GM10248 (cell line): ENCODE measurements at regions of chr12 and their contacts with region 1.

Region 1: GRCh38 chr12:52087961-52088820 is 8.7 kb downstream of the SMIM41 start:
- DNase-seq: peak; percentile 65
- CTCF ChIP-seq: no peak

Region 2: DNA sequence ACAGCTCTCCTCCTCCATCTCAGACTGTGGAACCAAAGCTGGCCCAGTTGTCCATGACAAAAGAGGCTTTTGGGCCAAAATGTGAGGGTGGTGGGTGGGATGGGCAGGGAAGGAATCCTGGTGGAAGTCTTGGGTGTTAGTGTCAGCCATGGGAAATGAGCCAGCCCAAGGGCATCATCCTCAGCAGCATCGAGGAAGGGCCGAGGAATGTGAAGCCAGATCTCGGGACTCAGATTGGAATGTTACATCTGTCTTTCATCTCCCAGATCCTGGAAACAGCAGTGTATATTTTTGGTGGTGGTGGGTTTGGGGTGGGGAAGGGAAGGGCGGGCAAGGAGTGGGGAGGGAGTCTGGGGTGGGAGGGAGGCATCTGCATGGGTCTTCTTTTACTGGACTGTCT is 93.2 kb before region 1 on chr12:
- CTCF ChIA-PET with region 1: interaction called, 15 read pairs
- POLR2A ChIA-PET with region 1: no interaction called
- DNase-seq: no peak
- CTCF ChIP-seq: no peak

Region 3: DNA sequence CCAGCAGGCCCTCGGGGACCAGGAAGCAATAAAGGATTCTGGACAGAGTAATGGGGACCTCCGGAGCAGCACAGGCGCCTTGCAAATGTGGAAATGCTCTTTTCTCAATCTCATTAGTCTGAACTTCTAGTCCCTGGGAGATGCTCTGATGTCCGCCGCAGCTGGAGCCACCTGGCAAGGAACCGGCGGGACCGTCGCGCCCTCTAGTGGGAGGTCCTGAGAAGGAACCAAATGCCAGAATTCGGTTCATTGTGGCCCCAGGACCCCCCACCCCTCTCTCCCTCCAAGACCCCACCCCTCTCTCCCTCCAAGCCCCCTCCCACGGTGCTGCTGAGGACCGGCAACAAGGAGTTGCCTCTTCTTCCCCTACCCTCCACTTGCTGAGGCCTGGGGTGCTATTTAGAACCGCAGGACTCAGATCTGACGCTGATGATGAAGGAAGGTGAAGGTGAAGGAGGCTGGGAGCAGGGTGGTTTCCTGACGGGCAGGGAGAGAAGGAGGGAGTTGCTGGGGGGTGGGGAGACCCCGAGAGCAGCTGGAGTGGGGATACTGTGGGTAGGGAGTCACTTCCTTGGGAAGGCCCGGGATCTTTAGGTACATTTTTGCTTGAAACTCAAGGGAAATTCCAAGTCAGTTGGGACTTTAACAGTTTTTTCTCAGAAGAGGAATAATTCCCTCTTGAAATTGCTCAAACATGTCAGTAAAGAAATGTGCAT is 33.8 kb after region 1 on chr12:
- CTCF ChIA-PET with region 1: interaction called, 19 read pairs
- POLR2A ChIA-PET with region 1: no interaction called
- DNase-seq: peak; percentile 81
- CTCF ChIP-seq: peak; percentile 81

Region 4: GRCh38 chr12:52144449-52145227 is 56.4 kb after region 1 on chr12:
- CTCF ChIA-PET with region 1: no interaction called
- POLR2A ChIA-PET with region 1: no interaction called
- DNase-seq: no peak
- CTCF ChIP-seq: no peak